Activated CD4-positive, alpha-beta memory T cell treated with anti-CD3 and anti-CD28 coated beads for 36 hours (primary cell): ENCODE measurements at regions of chr3 and their contacts with region 1.

Region 1: GRCh38 chr3:186617038-186617946 is 4.4 kb downstream of the AHSG start:
- DNase-seq: peak; percentile 95
- H3K4me3 Mint-ChIP-seq: peak overlapping the region; percentile 62
- H3K27ac Mint-ChIP-seq: peak overlapping the region; percentile 70
- H3K4me1 Mint-ChIP-seq: peaks cover 20% of the 10 kb centered on the region
- H3K27me3 Mint-ChIP-seq: peaks cover 24% of the 10 kb centered on the region

Region 2: DNA sequence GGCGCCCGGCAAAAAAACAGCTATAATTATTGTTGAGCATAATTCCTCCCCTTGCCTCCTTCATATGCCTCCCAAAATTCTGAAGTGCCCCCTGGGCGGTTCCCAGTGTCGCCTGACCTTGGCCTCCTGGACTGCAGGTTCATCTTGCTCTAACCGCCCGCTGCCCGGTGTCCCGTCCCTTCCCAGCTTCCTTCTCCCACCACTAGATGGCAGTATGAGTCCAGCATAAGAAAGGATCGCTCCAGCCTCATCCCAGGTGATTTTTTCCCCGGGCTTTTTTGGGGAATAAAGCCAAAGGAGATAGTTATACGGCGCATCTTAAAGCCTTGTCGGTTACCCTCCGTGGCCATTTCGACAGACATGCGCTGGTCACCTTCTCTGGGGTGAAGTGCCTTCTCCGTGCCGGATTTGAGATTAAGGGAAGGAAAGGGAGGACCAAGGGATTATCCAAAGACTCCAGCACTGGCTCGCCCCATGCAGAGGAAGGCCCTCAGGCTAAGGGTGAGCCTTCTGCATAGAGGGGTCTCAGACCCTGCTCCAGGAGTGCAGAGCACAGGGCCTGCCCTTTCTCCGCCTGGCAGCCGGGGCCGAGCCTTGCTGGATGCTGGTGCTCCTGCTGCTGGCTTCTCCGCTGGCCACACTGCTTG is 633.7 kb before region 1 on chr3:
- CTCF ChIA-PET with region 1: interaction called, 47 read pairs
- POLR2A ChIA-PET with region 1: no interaction called
- intact Hi-C with region 1: no loop called
- DNase-seq: peak; percentile 64
- H3K4me3 Mint-ChIP-seq: no peak overlapping the region
- H3K27ac Mint-ChIP-seq: no peak overlapping the region
- H3K4me1 Mint-ChIP-seq: peaks cover 4% of the 10 kb centered on the region
- H3K27me3 Mint-ChIP-seq: peaks cover 11% of the 10 kb centered on the region

Region 3: GRCh38 chr3:186259612-186260383 is 357.5 kb before region 1 on chr3:
- CTCF ChIA-PET with region 1: interaction called, 14 read pairs
- POLR2A ChIA-PET with region 1: no interaction called
- intact Hi-C with region 1: loop called (anchors 5 kb)
- DNase-seq: peak; percentile 85
- H3K4me3 Mint-ChIP-seq: peak overlapping the region; percentile 24
- H3K27ac Mint-ChIP-seq: peak overlapping the region; percentile 65
- H3K4me1 Mint-ChIP-seq: peaks cover 27% of the 10 kb centered on the region
- H3K27me3 Mint-ChIP-seq: peaks cover 6% of the 10 kb centered on the region

Region 4: GRCh38 chr3:186570096-186570940 is 47.0 kb before region 1 on chr3 and contains the start of gene DNAJB11:
- CTCF ChIA-PET with region 1: interaction called, 85 read pairs
- POLR2A ChIA-PET with region 1: interaction called, 12 read pairs
- intact Hi-C with region 1: loop called (anchors 2 kb)
- DNase-seq: peak; percentile 100
- H3K4me3 Mint-ChIP-seq: peak within 1 kb of the TSS; percentile 95
- H3K27ac Mint-ChIP-seq: peak within 1 kb of the TSS; percentile 91
- H3K4me1 Mint-ChIP-seq: peaks cover 49% of the 10 kb centered on the region
- H3K27me3 Mint-ChIP-seq: no peaks in the 10 kb centered on the region
- total RNA-seq, gene DNAJB11: 36.9 to 39.5 TPM

Region 5: GRCh38 chr3:186630950-186631641 is 13.8 kb after region 1 on chr3:
- CTCF ChIA-PET with region 1: interaction called, 49 read pairs
- POLR2A ChIA-PET with region 1: interaction called, 3 read pairs
- intact Hi-C with region 1: no loop called
- DNase-seq: no peak
- H3K4me3 Mint-ChIP-seq: no peak overlapping the region
- H3K27ac Mint-ChIP-seq: no peak overlapping the region
- H3K4me1 Mint-ChIP-seq: no peaks in the 10 kb centered on the region
- H3K27me3 Mint-ChIP-seq: peaks cover 7% of the 10 kb centered on the region

Region 6: GRCh38 chr3:186783073-186783730 is 165.9 kb after region 1 on chr3 and contains the start of gene EIF4A2:
- CTCF ChIA-PET with region 1: interaction called, 10 read pairs
- POLR2A ChIA-PET with region 1: interaction called, 22 read pairs
- intact Hi-C with region 1: loop called (anchors 1 kb)
- DNase-seq: peak; percentile 92
- H3K4me3 Mint-ChIP-seq: peak within 1 kb of the TSS; percentile 97
- H3K27ac Mint-ChIP-seq: peak within 1 kb of the TSS; percentile 99
- H3K4me1 Mint-ChIP-seq: peaks cover 38% of the 10 kb centered on the region
- H3K27me3 Mint-ChIP-seq: no peaks in the 10 kb centered on the region
- total RNA-seq, gene EIF4A2: 390 to 393 TPM

Region 7: DNA sequence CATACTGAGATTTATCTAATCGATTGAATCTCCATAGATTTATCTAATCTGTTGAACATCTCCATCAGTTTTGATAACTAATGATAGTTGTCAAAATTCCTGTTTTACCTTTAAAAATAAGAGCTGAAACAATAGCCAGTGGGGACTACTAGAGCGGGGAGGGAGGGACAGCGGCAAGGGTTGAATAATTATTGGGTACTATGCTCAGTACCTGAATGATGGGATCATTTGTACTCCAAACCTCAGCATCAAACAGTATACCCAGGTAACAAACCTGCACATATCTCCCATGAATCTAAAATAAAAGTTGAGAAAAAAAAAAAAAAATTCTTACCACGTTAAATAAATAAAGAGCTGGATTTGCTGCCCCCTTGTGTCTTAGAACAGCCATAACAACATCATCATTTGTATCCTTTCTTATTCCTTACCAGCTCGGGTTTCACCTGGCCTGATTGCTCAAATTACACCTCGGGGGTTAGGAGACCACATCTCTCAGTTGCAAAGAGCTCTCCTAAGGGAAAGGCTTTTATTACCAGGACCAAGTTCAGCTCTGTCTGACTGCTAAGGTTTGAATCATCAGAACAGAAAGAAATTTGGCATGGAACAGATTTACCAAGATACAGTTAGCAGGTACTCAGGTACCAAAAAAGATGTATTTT is 547.7 kb after region 1 on chr3:
- CTCF ChIA-PET with region 1: interaction called, 18 read pairs
- POLR2A ChIA-PET with region 1: no interaction called
- intact Hi-C with region 1: no loop called
- DNase-seq: peak; percentile 20
- H3K4me3 Mint-ChIP-seq: no peak overlapping the region
- H3K27ac Mint-ChIP-seq: no peak overlapping the region
- H3K4me1 Mint-ChIP-seq: peaks cover 1% of the 10 kb centered on the region
- H3K27me3 Mint-ChIP-seq: peaks cover 3% of the 10 kb centered on the region